ENCODE measurements at regions of chr19 and their contacts with region 1.

Region 1: GRCh38 chr19:18281082-18282020 is at the start of gene JUND:
- DNase-seq: peak; percentile 99
- ATAC-seq: peak; percentile 83
- H3K4me3 ChIP-seq: peak within 1 kb of the TSS; percentile 77 to 97
- H3K27ac ChIP-seq: peak within 1 kb of the TSS; percentile 95 to 100
- H3K4me1 ChIP-seq: no peaks in the 10 kb centered on the region
- H3K27me3 ChIP-seq: no peaks in the 10 kb centered on the region
- total RNA-seq, gene JUND: 214 to 492 TPM

Region 2: GRCh38 chr19:18304458-18305310 is 23.3 kb after region 1 on chr19:
- intact Hi-C with region 1: loop called in 1 of 2 experiments (anchors 2 kb)
- DNase-seq: peak; percentile 94 to 97
- ATAC-seq: peak; percentile 90
- H3K4me3 ChIP-seq: peak overlapping the region in 1 of 2 donors; percentile 24
- H3K27ac ChIP-seq: peak overlapping the region; percentile 96
- H3K4me1 ChIP-seq: no peaks in the 10 kb centered on the region
- H3K27me3 ChIP-seq: no peaks in the 10 kb centered on the region

Region 3: DNA sequence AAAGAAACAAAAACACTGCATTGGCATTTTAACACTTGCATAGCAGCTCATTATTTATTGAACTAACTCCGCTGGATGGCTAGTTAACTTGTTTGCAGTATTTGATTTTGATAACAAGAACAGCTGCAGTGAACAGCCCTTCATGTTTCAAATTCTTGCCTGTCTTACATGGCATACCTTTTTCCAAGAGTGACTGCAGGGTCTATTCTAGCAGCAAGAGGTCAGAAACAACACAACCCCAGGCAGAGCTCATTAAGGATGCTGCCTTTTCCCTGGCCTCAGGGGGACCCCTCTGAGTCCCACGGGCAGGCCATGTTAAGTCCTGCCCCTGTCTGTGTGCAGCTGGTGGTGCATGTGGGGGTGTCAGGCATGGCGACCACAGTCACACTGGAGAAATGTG is 75.7 kb after region 1 on chr19:
- intact Hi-C with region 1: no loop called
- DNase-seq: no peak
- ATAC-seq: no peak
- H3K4me3 ChIP-seq: no peak overlapping the region
- H3K27ac ChIP-seq: no peak overlapping the region
- H3K4me1 ChIP-seq: no peaks in the 10 kb centered on the region
- H3K27me3 ChIP-seq: no peaks in the 10 kb centered on the region